Ovary (tissue), 10 donors: ENCODE measurements at regions of chr14 and their contacts with region 1.

Region 1: DNA sequence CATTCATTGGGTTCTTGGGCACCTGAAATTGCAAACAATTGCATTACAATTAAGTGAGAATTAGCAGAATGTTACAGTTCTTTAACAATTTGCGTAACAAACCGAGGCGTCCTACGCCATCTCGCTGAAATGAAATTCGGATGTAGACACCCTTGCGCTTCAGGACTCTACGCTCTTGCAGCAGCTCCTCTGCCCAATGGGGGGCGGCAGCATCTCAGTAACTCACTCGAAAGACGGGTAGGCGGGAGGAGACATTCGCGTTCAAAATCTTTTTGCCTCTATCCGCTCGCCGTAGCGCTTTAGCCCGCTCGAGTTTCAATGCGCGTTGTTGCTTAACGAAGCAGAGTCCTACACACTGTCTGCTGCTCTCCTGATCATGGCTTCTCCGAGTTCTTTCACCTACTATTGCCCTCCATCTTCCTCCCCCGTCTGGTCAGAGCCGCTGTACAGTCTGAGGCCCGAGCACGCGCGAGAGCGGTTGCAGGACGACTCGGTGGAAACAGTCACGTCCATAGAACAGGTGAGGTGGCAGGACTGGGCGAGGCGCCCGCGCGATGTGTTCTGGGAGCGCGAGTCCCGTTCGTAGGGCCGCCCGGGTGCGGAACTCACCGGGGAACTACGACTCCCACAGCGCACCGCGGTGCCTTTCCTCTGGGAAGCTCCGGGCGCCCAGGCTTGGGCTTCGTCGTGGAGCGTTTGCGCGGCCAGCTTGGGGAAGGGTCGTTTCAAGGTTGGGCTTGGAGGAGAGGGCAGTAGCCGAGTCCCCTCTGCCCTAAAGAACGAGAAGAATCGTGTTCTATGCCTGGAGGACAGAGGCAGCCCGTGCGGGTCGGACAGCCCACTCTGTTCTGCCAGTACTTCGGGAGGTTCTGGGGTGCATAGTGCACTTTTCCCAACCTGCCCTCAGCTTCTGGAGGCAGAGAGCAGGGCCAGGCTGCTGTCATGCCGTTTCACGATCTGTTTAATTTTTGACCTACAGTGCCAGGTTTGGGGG is at the start of gene FNTB:
- DNase-seq: peak; percentile 93 to 96 (median 94)
- H3K4me3 ChIP-seq: peak within 1 kb of the TSS; percentile 76
- H3K27ac ChIP-seq: peak within 1 kb of the TSS; percentile 19 to 77
- H3K4me1 ChIP-seq: peaks cover 4% of the 10 kb centered on the region
- H3K27me3 ChIP-seq: no peaks in the 10 kb centered on the region
- CTCF ChIP-seq: peak; percentile 62 to 82 (median 70)
- EP300 ChIP-seq: no peak
- POLR2A ChIP-seq: peak; percentile 33
- total RNA-seq, gene FNTB: 9.5 to 16.4 (median 14.1) TPM

Region 2: DNA sequence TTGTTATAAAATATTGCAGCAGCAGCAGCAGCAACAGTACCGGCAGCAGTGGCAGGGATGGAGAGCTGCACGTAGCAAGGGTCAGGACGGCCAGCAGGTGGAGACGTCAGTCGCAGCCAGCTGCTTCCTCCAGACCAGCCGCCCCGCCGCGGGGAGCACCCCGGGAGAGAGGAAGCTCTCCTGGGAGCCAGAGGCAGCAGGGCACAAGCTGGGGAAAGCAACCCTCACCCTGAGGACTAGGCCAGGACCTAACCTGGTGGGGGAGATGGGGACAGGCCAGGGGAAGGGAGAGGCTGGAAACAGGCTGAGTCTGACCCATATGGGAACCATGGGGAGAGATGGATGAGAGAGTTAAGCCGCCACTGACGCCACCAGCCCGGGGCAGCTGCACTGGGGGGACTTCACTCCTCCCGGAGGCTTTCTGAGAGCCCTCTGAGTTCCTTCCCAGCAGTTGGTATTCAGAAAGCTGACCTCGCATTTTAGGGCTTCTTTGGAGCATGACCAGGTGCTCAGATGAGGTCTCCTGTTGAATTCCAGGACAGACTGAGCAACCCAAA is 163.5 kb before region 1 on chr14:
- intact Hi-C with region 1: loop called in 1 of 4 experiments (anchors 5 kb)
- DNase-seq: peak; percentile 62 to 85 (median 70)
- H3K4me3 ChIP-seq: no peak overlapping the region
- H3K27ac ChIP-seq: no peak overlapping the region
- H3K4me1 ChIP-seq: no peaks in the 10 kb centered on the region
- H3K27me3 ChIP-seq: no peaks in the 10 kb centered on the region
- CTCF ChIP-seq: peak; percentile 29 to 56 (median 46)
- EP300 ChIP-seq: no peak
- POLR2A ChIP-seq: no peak

Region 3: DNA sequence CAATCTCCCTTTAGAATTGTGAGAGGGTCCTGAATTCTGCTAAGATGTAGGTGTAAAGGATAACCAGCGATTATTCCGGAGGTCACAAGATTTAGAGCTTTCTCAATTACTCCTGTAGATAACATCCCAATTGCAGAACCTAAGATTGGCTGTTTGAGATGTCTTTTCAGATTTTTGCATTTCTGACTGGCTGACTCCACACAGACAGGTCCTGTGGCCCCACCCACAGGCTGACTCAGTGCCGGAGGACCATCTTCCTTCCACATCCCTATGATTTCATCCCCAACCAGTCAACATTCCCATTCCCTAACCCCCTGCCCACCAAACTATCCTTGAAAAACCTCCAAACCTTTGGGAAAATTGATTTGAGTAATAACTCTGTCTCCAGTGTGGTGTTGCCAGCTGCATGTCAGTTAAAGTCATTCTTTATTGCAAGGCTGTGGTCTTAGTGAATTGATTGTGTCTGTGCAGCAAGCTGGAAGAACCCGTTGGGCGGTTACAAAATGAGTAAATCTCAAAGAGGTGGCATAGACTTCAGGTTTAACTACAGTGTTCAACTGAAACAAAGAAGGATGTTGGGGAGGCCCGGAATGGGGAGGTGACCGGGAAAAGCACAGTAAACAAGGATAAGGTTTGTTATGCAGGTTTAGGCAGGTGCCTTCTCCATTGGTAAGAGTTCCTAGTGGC is 10.4 kb after region 1 on chr14:
- intact Hi-C with region 1: no loop called
- DNase-seq: no peak
- H3K4me3 ChIP-seq: no peak overlapping the region
- H3K27ac ChIP-seq: no peak overlapping the region
- H3K4me1 ChIP-seq: peaks cover 1% of the 10 kb centered on the region
- H3K27me3 ChIP-seq: no peaks in the 10 kb centered on the region
- CTCF ChIP-seq: no peak
- EP300 ChIP-seq: no peak
- POLR2A ChIP-seq: no peak

Region 4: DNA sequence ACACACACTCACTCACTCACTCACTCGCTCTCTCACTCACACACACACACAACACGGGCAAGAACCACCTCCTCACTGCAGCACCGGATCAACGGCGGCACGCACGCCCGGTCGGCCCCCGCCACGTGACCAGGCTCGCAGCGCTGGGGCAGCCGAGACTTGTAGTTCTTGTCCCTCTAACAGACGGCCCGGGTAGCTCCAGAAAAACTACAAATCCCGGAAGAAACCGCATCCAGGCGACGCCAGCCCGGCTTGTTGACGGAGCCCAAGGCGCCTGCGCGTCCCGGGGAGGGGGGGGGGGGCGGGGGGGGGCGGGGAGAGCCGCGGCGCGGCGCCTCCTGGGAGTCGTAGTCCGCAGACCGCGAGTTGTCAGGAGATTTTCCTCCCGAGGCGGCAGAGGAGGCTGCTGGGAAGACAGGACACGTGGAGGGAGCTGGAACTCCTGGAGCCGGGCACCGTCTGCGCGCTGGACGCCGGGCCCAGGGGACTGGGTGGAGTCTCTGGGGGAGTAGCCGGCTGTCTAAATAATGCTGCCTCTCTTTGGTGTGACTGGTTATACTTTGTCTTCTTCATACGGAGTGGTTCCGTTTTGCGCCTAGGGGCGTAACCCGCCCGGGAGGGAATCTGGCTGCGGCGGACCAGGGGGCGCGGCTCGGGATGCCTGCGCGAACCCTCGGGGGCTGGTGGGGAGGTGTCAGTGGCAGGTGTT is 115.7 kb after region 1 on chr14 and contains the start of gene MAX:
- intact Hi-C with region 1: no loop called
- DNase-seq: peak; percentile 96 to 97 (median 96)
- H3K4me3 ChIP-seq: peak within 1 kb of the TSS; percentile 86
- H3K27ac ChIP-seq: peak within 1 kb of the TSS; percentile 37 to 66
- H3K4me1 ChIP-seq: peaks cover 8% of the 10 kb centered on the region
- H3K27me3 ChIP-seq: no peaks in the 10 kb centered on the region
- CTCF ChIP-seq: no peak
- EP300 ChIP-seq: no peak
- POLR2A ChIP-seq: peak; percentile 43
- total RNA-seq, gene MAX: 48.4 to 168 (median 109) TPM

Region 5: GRCh38 chr14:65156568-65157366 is 169.9 kb after region 1 on chr14:
- intact Hi-C with region 1: loop called in 1 of 4 experiments (anchors 10 kb)
- DNase-seq: peak; percentile 45 to 74 (median 57)
- H3K4me3 ChIP-seq: no peak overlapping the region
- H3K27ac ChIP-seq: peak overlapping the region in 1 of 2 donors; percentile 69
- H3K4me1 ChIP-seq: peaks cover 4% of the 10 kb centered on the region
- H3K27me3 ChIP-seq: no peaks in the 10 kb centered on the region
- CTCF ChIP-seq: no peak
- EP300 ChIP-seq: no peak
- POLR2A ChIP-seq: no peak